Tibial artery (tissue), 4 donors: ENCODE measurements at regions of chr6 and their contacts with region 1.

Region 1: GRCh38 chr6:9948678-9949077 is 466.2 kb downstream of the TFAP2A start:
- DNase-seq: no peak
- H3K4me3 ChIP-seq: no peak overlapping the region
- H3K27ac ChIP-seq: no peak overlapping the region
- H3K4me1 ChIP-seq: no peaks in the 10 kb centered on the region
- H3K27me3 ChIP-seq: no peaks in the 10 kb centered on the region
- CTCF ChIP-seq: no peak

Region 2: DNA sequence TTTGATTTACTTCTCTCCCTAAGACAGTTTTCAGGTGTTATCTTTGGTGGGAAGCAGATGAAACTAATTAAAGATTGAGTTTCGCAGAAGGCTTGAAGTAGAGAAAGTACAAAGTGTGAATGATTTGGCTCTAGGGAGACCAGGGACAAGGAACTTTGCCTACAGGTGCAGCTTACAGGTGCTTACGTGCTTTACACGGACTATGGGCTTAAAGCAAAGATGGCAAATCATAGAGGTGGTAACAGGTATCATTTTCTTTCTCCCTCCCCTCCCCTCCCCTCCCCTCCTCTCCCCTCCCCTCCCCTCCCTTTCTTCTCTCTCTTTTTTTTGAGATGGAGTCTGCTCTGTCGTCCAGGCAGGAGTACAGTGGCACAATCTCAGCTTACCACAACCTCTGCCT is 1649.6 kb before region 1 on chr6:
- intact Hi-C with region 1: loop called (anchors 5 kb)
- DNase-seq: no peak
- H3K4me3 ChIP-seq: no peak overlapping the region
- H3K27ac ChIP-seq: no peak overlapping the region
- H3K4me1 ChIP-seq: no peaks in the 10 kb centered on the region
- H3K27me3 ChIP-seq: no peaks in the 10 kb centered on the region
- CTCF ChIP-seq: no peak